ENCODE measurements at regions of chr9 and their contacts with region 1.

Region 1: DNA sequence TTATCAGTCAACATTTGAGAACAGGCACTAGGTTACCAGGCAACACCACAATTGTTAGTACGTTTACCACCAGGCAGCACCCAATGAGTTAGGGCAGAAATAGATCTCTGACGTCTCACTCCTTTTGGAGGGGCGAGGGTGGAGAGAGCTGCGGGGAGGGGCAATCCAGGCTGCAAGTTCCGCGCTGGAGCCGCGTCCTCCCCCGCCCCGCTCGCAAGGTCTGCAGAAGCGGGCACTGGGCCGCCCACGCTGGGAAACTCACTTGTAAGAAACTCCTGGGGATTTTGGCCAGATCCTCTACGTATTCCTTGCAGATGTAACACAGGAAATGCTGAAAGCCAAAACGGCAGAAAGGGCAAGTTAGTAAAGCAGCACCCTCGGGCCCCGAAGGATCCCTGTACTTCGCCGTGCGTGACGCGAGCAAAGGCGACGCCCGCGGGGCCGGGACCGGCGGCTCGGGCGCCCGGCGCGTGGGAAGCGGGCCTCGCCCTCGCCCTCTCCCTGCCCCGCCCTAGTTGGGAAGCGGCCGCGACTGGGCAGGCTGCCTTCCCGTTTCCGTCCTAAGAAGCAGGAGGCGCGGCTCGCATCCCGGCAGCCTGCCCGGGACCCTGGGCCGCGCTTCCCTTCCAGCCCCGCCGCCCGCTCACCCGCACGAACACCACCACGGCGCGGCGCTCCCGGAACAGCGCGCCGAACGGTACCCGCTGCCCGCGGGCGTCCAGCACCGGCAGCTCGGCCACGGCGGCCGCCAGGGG is 497 bp downstream of the PRXL2C start:
- DNase-seq: peak; percentile 92
- ATAC-seq: peak; percentile 90
- H3K4me3 ChIP-seq: peak overlapping the region; percentile 75
- H3K27ac ChIP-seq: peak overlapping the region; percentile 96
- H3K4me1 ChIP-seq: peaks cover 7% of the 10 kb centered on the region
- H3K27me3 ChIP-seq: no peaks in the 10 kb centered on the region
- CTCF ChIP-seq: no peak

Region 2: DNA sequence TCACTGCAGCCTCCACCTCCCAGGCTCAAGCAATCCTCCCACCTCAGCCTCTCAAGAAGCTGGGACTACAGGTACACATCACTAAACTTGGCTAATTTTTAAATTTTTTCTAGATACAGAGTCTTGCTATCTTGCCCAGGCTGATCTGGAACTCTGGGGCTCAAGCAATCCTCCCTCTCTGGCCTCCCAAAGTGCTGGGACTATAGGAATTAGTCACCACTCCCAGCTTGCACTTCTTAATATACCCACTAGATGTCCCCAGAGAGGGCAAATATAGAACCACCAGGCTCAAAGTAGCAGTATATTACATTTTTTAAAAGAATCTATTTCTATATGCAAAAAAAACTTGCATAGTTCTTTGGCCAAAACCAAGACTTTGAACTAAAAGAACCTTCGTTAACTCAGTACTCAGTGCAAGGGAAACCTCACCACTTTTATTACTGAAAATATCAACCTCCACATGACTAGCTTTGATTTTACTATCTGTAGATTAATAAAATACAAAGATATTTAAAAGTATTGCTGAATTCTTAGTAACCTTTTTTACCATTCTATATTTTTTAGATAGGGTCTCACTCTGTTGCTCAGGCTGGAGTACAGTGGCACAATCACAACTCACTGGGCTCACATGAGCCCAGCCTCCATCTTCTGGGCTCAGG is 326.8 kb before region 1 on chr9:
- intact Hi-C with region 1: loop called (anchors 10 kb)
- DNase-seq: no peak
- ATAC-seq: peak; percentile 93
- H3K4me3 ChIP-seq: no peak overlapping the region
- H3K27ac ChIP-seq: no peak overlapping the region
- H3K4me1 ChIP-seq: no peaks in the 10 kb centered on the region
- H3K27me3 ChIP-seq: no peaks in the 10 kb centered on the region
- CTCF ChIP-seq: peak; percentile 89

Measured in upper lobe of right lung (tissue), 1 donor.